Naive thymus-derived CD4-positive, alpha-beta T cell (primary cell): ENCODE measurements at regions of chr10 and their contacts with region 1.

Region 1: GRCh38 chr10:63256009-63256773 is 123.1 kb downstream of the NRBF2 start:
- DNase-seq: no peak
- ATAC-seq: peak; percentile 54
- H3K4me3 ChIP-seq: no peak overlapping the region
- H3K4me3 Mint-ChIP-seq: peak overlapping the region in 8 of 10 donors; percentile 26 to 66 (median 48)
- H3K27ac ChIP-seq: no peak overlapping the region
- H3K27ac Mint-ChIP-seq: peak overlapping the region in 8 of 9 donors; percentile 32 to 85 (median 51)
- H3K4me1 ChIP-seq: peaks cover 26 to 40% of the 10 kb centered on the region in 2 donors
- H3K4me1 Mint-ChIP-seq: peaks cover 54 to 100% (median 92%) of the 10 kb centered on the region in 7 donors
- H3K27me3 ChIP-seq: no peaks in the 10 kb centered on the region
- H3K27me3 Mint-ChIP-seq: no peaks in the 10 kb centered on the region

Region 2: DNA sequence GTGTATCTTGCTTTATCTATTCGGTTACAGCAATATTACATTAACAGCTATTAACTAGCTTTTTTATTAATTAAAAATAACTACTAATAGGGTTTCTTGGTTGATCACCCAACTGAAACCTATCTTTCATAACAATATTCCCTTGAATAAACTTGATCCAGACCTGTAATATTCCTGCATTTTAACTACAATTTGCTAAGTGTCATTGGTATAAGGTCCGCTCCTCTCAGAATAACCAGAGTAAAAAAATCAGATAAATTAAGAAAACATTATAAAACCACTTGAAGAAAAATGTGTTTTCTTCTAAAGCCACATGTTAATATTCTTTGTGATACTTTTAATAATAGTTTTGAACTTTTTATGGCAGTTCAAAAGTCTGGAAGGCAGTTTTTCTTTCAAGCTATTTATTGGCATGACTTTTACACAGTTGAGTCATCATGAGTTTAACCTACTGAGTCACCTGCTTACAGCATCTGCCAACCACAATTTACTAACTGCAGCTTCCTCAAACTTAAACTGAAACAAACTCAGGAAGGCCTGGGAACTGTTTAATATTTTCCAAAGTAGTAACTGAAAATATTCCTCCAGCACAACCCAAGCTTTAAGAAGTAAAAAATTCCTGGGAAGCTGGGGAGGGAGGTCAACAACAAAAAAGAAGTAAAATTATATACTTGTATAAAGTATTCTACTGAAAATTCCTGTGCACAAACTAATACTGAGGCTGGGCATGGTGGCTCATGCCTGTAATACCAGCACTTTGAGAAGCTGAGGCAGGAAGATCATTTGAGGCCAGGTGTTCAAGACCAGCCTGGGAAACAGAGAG is 19.9 kb before region 1 on chr10:
- CTCF ChIA-PET with region 1: no interaction called
- POLR2A ChIA-PET with region 1: no interaction called
- intact Hi-C with region 1: loop called in 1 of 2 experiments (anchors 2 kb)
- DNase-seq: no peak
- ATAC-seq: peak; percentile 82
- H3K4me3 ChIP-seq: no peak overlapping the region
- H3K4me3 Mint-ChIP-seq: peak overlapping the region in 4 of 10 donors; percentile 14 to 51 (median 40)
- H3K27ac ChIP-seq: no peak overlapping the region
- H3K27ac Mint-ChIP-seq: peak overlapping the region in 4 of 9 donors; percentile 5 to 73 (median 20)
- H3K4me1 ChIP-seq: peaks cover 35 to 36% of the 10 kb centered on the region in 2 donors
- H3K4me1 Mint-ChIP-seq: peaks cover 33 to 82% (median 65%) of the 10 kb centered on the region in 7 donors
- H3K27me3 ChIP-seq: no peaks in the 10 kb centered on the region
- H3K27me3 Mint-ChIP-seq: no peaks in the 10 kb centered on the region

Region 3: DNA sequence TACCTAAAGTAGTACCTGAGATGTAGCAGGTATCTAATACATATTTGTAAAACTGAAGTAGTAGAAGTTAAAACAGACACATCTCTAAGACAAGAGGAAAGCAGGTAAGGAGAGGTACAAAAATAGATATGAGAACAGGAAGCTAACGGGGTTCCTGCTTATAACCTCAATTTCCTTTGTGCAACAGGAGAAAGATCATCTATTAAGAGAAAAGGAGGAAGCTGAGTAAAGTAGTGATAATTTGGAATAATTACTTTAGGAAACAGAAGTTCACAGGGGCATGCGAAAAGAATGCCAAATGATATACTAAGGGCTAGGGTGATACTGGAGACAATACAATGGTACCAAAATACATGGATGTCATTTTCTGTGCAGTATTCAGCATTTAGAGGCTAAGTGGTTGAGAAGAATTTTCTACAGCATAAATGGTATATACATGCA is 14.3 kb before region 1 on chr10:
- CTCF ChIA-PET with region 1: interaction called, 3 read pairs
- POLR2A ChIA-PET with region 1: interaction called, 3 read pairs
- intact Hi-C with region 1: loop called in 1 of 2 experiments (anchors 1 kb)
- DNase-seq: peak in 5 of 9 donors; percentile 27 to 41 (median 30)
- ATAC-seq: peak; percentile 45
- H3K4me3 ChIP-seq: peak overlapping the region; percentile 20
- H3K4me3 Mint-ChIP-seq: peak overlapping the region; percentile 25 to 84 (median 77)
- H3K27ac ChIP-seq: peak overlapping the region; percentile 46
- H3K27ac Mint-ChIP-seq: peak overlapping the region; percentile 68 to 89 (median 81)
- H3K4me1 ChIP-seq: peaks cover 43 to 44% of the 10 kb centered on the region in 2 donors
- H3K4me1 Mint-ChIP-seq: peaks cover 54 to 95% (median 79%) of the 10 kb centered on the region in 7 donors
- H3K27me3 ChIP-seq: no peaks in the 10 kb centered on the region
- H3K27me3 Mint-ChIP-seq: no peaks in the 10 kb centered on the region